Activated CD4-positive, alpha-beta memory T cell treated with anti-CD3 and anti-CD28 coated beads for 36 hours (primary cell): ENCODE measurements at regions of chr14 and their contacts with region 1.

Region 1: DNA sequence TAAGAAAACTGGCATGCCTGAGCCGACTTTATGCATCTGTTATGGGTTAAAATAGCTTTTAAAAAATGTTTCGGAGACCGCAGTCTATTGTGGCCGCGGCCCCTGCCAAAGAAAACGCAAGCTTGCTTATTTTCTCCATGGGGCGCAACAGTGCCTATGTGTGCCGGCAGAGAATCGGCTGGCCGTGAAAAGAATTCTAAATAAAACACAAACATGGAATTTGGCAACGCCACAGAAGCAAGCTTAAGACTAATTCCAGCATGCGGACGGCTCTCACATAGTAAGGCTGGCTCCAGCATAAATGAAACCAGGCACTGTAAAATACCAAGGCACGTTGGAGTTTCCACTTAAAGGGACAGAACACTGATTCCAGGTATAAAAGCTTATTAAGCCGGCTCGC is 56.7 kb downstream of the BCL11B start:
- DNase-seq: no peak
- H3K4me3 Mint-ChIP-seq: peak overlapping the region; percentile 70
- H3K27ac Mint-ChIP-seq: peak overlapping the region; percentile 91
- H3K4me1 Mint-ChIP-seq: peaks cover 93% of the 10 kb centered on the region
- H3K27me3 Mint-ChIP-seq: no peaks in the 10 kb centered on the region

Region 2: GRCh38 chr14:99127651-99128167 is 87.6 kb before region 1 on chr14:
- CTCF ChIA-PET with region 1: no interaction called
- POLR2A ChIA-PET with region 1: no interaction called
- intact Hi-C with region 1: no loop called
- DNase-seq: no peak
- H3K4me3 Mint-ChIP-seq: no peak overlapping the region
- H3K27ac Mint-ChIP-seq: no peak overlapping the region
- H3K4me1 Mint-ChIP-seq: peaks cover 11% of the 10 kb centered on the region
- H3K27me3 Mint-ChIP-seq: no peaks in the 10 kb centered on the region

Region 3: GRCh38 chr14:99201351-99202073 is 13.8 kb before region 1 on chr14:
- CTCF ChIA-PET with region 1: interaction called, 6 read pairs
- POLR2A ChIA-PET with region 1: interaction called, 5 read pairs
- intact Hi-C with region 1: loop called (anchors 1 kb)
- DNase-seq: no peak
- H3K4me3 Mint-ChIP-seq: peak overlapping the region; percentile 39
- H3K27ac Mint-ChIP-seq: peak overlapping the region; percentile 91
- H3K4me1 Mint-ChIP-seq: peaks cover 100% of the 10 kb centered on the region
- H3K27me3 Mint-ChIP-seq: no peaks in the 10 kb centered on the region

Region 4: GRCh38 chr14:99230208-99231151 is 15.2 kb after region 1 on chr14:
- CTCF ChIA-PET with region 1: interaction called, 12 read pairs
- POLR2A ChIA-PET with region 1: interaction called, 8 read pairs
- intact Hi-C with region 1: loop called (anchors 2 kb)
- DNase-seq: peak; percentile 94
- H3K4me3 Mint-ChIP-seq: peak overlapping the region; percentile 68
- H3K27ac Mint-ChIP-seq: peak overlapping the region; percentile 96
- H3K4me1 Mint-ChIP-seq: peaks cover 95% of the 10 kb centered on the region
- H3K27me3 Mint-ChIP-seq: no peaks in the 10 kb centered on the region